ENCODE measurements at regions of chr11 and their contacts with region 1.

Region 1: DNA sequence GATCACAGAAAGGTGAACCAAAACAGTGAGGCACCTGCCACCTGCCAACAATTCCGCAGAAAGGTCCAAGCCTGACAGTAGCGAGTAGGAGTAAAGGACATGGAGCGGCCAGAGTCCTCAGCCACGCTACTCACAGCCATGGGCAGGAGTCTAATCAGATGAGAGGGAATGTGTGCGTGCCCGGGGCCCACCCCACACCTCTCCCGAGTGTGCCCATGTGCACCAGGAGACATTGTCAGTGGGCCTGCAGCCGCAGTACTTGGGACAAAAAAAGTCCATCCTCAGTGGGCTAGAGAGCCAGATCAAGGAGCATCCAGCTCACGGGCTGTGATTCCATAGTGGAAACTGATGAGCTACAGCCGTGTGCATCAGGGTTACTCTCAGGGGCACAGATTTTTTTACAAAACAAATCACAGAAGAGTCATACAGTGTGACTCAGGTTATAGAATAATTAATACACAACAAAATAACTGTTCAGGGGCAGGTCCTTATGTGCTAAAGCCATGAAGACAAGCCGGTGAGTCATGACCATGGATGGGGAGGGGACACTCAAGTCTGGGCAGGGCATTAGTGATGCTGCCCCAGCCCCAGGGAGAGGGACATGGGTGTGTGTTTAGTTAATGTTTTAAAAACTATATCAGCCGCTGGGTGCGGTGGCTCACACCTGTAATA is 12.0 kb downstream of the SART1 start:
- DNase-seq: no peak

Region 2: DNA sequence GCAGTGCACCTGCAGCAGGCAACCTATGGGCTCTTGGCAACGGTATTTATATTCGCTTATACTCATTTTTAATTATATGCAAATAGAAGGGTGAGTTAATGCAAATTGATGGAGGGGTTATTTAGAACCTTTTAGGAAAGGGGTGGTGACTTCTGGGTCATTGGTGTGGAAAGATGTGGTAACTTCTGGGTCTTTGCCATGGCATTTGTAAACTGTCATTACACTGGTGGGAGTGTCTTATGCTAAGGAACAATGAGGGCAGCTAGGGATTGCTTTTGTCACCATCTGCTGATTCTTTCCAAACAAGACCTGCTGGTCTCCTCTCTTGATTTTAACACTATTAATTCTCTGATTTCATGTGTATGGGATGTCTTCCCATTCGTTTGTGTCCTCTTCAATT is 273.2 kb before region 1 on chr11:
- intact Hi-C with region 1: loop called in 1 of 2 experiments (anchors 10 kb)
- DNase-seq: no peak

Region 3: GRCh38 chr11:65849366-65849765 is 124.2 kb before region 1 on chr11:
- intact Hi-C with region 1: no loop called
- DNase-seq: peak; percentile 77

Region 4: GRCh38 chr11:65919146-65920033 is 54.2 kb before region 1 on chr11 and contains the start of gene DRAP1:
- intact Hi-C with region 1: loop called in 1 of 2 experiments (anchors 5 kb)
- DNase-seq: peak; percentile 100
- total RNA-seq, gene DRAP1: 76.0 to 92.2 TPM

Region 5: GRCh38 chr11:65932558-65932919 is 41.0 kb before region 1 on chr11:
- intact Hi-C with region 1: no loop called
- DNase-seq: no peak